ENCODE measurements at regions of chr6 and their contacts with region 1.

Region 1: DNA sequence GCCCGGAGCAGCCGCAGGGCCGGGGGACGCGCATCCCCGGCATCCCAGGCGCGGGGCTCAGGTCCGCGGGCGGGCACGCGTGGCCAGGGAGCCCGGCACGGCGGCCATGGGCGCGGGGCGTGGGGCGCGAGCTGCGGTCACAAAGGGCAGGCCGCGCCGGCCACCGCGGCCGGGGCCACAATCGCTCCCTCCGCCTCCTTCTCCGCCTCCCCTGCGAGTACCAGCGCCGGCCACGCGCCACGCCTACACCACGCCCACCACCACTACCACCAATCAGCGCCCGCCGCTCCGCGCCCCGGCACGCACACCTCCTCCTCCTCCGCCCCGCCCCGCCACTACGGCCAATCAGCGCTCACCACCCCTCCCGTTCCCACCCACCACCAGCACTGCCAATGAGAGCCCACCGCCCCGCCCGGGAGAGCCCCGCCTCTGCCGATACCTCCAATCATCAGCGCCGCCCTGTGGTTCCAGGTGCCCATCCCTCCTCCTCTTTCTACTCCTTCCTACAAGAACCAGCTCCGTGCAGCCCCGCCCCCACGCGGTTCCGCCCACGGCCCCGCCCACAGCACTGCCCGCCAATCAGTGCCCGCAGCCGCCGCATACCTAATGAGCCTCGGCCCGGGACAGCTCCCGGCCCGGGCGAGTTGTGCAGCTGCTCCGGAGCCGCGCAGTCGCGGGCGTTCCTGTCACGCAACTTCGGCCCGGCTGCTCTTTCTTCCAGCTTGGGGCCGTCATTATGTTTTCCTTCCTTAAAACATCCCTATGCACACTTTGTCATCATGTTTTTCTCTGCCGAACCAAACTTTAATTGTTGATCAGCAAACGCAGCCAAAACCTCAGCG is at the start of gene RPS6KA2:
- DNase-seq: peak; percentile 100
- H3K4me3 ChIP-seq: peak within 1 kb of the TSS; percentile 84 to 97 (median 94)
- H3K27ac ChIP-seq: peak within 1 kb of the TSS; percentile 85 to 96 (median 90)
- H3K4me1 ChIP-seq: peaks cover 24 to 55% (median 54%) of the 10 kb centered on the region in 4 donors
- H3K27me3 ChIP-seq: no peaks in the 10 kb centered on the region
- CTCF ChIP-seq: no peak
- EP300 ChIP-seq: no peak
- POLR2A ChIP-seq: peak; percentile 85
- total RNA-seq, gene RPS6KA2: 83.9 to 126 (median 112) TPM

Region 2: GRCh38 chr6:166466178-166467122 is 160.8 kb before region 1 on chr6:
- intact Hi-C with region 1: loop called (anchors 10 kb)
- DNase-seq: no peak
- H3K4me3 ChIP-seq: peak overlapping the region in 2 of 4 donors; percentile 3 to 4
- H3K27ac ChIP-seq: peak overlapping the region; percentile 67 to 73 (median 71)
- H3K4me1 ChIP-seq: peaks cover 0 to 19% (median 17%) of the 10 kb centered on the region in 4 donors
- H3K27me3 ChIP-seq: no peaks in the 10 kb centered on the region
- CTCF ChIP-seq: no peak
- EP300 ChIP-seq: no peak
- POLR2A ChIP-seq: no peak

Region 3: GRCh38 chr6:166556871-166557322 is 70.4 kb before region 1 on chr6:
- intact Hi-C with region 1: loop called (anchors 5 kb)
- DNase-seq: peak; percentile 95
- H3K4me3 ChIP-seq: no peak overlapping the region
- H3K27ac ChIP-seq: peak overlapping the region; percentile 73 to 80 (median 76)
- H3K4me1 ChIP-seq: peaks cover 46 to 48% (median 47%) of the 10 kb centered on the region in 4 donors
- H3K27me3 ChIP-seq: no peaks in the 10 kb centered on the region
- CTCF ChIP-seq: peak in 1 of 3 experiments; percentile 26
- EP300 ChIP-seq: no peak
- POLR2A ChIP-seq: peak; percentile 57

Measured in esophagus muscularis mucosa (tissue), 4 donors.